ENCODE measurements at regions of chr18 and their contacts with region 1.

Region 1: DNA sequence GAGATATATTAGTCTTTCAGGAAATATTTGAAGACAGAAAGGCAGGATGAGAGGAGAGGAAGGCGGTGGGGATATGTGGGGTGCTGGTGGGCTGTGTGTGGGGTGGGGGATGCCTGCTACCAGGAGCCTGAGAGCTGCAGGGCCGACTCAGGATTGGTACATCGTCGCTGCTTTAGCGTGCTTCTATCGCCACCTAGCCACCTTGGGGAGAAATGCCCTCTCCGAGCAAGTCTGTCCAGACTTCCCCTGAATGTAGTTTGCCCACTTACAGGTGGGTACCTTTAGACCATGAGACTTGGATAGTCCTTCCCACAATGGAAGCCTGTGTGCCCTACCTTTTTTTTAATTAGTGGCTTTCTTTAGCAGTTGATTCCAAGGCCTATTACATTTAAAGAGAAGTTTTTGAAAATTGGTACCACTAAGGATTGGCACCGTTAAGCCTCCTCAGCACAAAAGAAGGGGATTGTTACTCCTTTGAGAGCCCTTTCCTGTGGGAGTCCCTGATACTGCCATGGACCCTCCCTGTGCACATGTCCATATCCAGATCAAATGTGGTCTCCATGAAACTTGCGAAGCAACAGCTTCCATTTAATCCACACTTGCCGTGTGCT is 114.1 kb upstream of the NDUFV2 start:
- DNase-seq: peak; percentile 34
- H3K4me3 ChIP-seq: no peak overlapping the region
- H3K27ac ChIP-seq: no peak overlapping the region
- H3K4me1 ChIP-seq: peaks cover 38% of the 10 kb centered on the region
- H3K27me3 ChIP-seq: no peaks in the 10 kb centered on the region
- CTCF ChIP-seq: peak; percentile 93 to 96

Region 2: GRCh38 chr18:7221424-7222155 is 1766.8 kb before region 1 on chr18:
- CTCF ChIA-PET with region 1: no interaction called
- dilution Hi-C with region 1: no loop called
- in situ Hi-C with region 1: no loop called
- intact Hi-C with region 1: loop called (anchors 10 kb)
- DNase-seq: peak; percentile 58
- H3K4me3 ChIP-seq: no peak overlapping the region
- H3K27ac ChIP-seq: no peak overlapping the region
- H3K4me1 ChIP-seq: no peaks in the 10 kb centered on the region
- H3K27me3 ChIP-seq: no peaks in the 10 kb centered on the region
- CTCF ChIP-seq: peak; percentile 94 to 96

Region 3: GRCh38 chr18:8608795-8609658 is 379.3 kb before region 1 on chr18 and contains the start of gene RAB12:
- CTCF ChIA-PET with region 1: no interaction called
- dilution Hi-C with region 1: no loop called
- in situ Hi-C with region 1: no loop called
- intact Hi-C with region 1: no loop called
- DNase-seq: peak; percentile 74
- H3K4me3 ChIP-seq: peak within 1 kb of the TSS; percentile 79 to 91 (median 83)
- H3K27ac ChIP-seq: peak within 1 kb of the TSS; percentile 56
- H3K4me1 ChIP-seq: peaks cover 26% of the 10 kb centered on the region
- H3K27me3 ChIP-seq: no peaks in the 10 kb centered on the region
- CTCF ChIP-seq: peak; percentile 16 to 42
- total RNA-seq, gene RAB12: 36.1 to 47.8 TPM

Region 4: DNA sequence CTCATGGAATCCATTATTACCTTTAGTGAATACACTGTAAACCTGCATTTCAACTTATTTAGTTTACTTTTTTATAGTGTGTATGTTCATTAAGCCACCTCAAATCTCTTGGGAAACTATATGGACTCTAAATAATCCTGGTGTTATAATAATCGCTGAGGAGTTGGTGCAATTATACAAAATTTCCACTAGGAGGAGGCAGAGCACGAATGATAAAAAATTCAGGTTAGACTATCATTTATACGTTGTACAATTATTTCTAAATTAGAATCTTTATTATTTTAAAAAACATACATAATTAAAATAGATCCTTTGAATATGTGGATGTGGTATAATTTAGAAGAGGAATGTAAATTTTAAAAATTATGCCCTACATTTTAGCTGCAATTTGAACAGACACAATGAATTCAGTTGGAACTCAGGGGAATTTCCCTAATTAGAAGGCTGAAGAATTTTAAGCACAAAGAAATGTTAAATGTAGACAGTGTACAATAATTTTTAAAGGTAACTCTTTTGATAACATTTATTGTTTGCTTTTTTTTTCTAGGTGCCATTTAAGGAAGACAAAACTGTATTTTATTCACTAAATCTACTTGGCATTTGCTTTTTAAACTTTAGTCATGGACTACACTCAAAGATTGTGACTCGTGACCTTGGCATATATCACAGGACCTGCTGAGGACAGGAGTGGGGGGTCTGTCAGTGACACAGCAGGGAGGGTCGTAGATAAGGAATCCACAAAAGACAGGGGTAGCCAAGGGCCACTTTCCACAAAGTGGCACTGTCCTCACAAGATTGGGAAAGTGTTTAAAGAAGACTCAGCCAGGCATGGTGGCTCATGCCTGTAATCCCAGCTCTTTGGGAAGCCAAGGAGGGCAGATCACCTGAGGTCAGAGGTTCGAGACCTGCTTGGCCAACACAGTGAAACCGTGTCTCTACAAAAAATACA is 333.6 kb before region 1 on chr18:
- CTCF ChIA-PET with region 1: interaction called, 10 read pairs
- dilution Hi-C with region 1: no loop called
- in situ Hi-C with region 1: loop called (anchors 10 kb)
- intact Hi-C with region 1: loop called (anchors 1 kb)
- DNase-seq: no peak
- H3K4me3 ChIP-seq: no peak overlapping the region
- H3K27ac ChIP-seq: no peak overlapping the region
- H3K4me1 ChIP-seq: peaks cover 11% of the 10 kb centered on the region
- H3K27me3 ChIP-seq: no peaks in the 10 kb centered on the region
- CTCF ChIP-seq: peak; percentile 69 to 71

Region 5: DNA sequence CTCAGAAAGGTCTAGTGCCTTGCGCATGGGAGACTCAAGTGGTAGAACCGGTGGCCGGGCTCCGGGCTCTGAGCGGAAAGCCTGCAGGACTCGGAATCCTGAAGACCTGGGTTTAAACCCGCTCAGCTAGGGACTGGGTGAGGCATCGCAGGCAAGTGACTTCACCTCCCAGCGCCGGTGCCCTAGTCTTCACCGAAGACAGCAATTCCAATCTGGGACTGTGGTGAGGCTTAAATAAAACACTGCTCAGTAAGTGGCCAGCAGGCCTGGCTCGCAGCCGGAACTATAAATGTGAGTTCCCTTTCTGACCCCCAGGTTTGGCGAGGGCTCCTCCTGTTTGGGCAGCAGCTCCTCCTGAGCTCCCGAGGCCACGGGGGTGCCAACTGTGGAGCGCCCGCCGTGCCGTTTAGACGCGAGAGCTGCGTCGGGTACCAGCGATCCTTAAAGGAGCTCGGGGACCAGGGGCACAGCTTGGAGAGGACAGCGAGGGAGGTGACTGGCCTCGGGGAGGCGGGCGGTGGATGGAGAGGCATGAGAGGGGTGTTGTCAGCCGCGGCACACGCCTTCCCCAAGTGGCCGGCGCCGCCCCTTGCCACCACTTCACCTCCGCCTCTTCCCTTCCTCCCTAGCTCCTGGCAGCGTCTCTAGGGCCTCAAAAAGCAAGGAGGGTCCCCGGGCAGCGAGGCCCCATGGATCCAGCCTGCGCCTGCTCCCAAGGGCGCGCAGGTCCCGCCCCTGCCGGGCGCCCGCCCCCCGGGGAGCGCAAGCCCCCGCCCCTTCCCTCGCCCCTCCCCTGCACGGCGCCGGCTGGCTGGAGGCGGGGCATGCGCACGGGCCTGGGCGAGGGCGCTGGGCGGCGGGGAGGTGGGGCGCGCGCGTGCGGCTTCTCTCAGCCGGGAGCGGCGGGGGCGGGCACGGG is 283.7 kb before region 1 on chr18:
- CTCF ChIA-PET with region 1: interaction called, 9 read pairs
- dilution Hi-C with region 1: loop called (anchors 25 kb)
- in situ Hi-C with region 1: loop called in 1 of 2 experiments (anchors 10 kb)
- intact Hi-C with region 1: no loop called
- DNase-seq: peak; percentile 85
- H3K4me3 ChIP-seq: peak overlapping the region; percentile 47 to 80 (median 65)
- H3K27ac ChIP-seq: peak overlapping the region; percentile 47
- H3K4me1 ChIP-seq: peaks cover 15% of the 10 kb centered on the region
- H3K27me3 ChIP-seq: no peaks in the 10 kb centered on the region
- CTCF ChIP-seq: no peak

Region 6: DNA sequence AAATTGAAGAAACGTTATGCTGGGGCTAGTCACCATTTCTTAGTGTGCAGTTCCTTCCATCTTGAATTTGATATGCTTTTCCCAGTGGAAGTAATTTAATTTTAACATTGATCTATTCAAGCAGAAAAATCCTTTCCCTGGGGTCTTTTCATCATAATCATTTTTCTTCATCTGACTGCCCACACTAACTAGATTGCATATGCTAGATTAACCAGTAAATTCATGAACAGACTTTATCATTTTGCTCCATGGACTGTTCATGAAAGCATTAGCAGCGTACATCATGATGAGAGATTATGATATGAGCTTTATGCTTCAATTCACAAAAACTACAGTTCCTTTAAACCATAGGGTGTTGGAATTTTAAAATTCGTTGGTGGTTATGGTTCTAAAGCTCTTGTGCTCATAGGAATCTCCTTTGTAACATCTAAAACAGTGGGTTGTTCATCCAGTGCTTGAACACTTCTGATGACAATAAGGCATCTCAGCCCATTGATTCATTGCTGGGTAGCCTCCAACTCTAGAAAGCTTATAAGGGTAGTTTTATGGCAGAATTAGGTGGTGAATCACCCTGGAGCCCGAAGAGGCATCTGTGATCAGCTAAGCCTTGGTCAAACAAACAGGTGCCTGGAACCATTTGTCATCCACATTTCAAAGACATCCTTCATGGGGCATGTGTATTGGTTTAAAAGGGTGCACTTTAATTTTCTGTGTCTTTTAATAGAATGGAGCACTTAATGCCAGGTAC is 36.9 kb after region 1 on chr18:
- CTCF ChIA-PET with region 1: no interaction called
- dilution Hi-C with region 1: no loop called
- in situ Hi-C with region 1: no loop called
- intact Hi-C with region 1: no loop called
- DNase-seq: peak; percentile 42
- H3K4me3 ChIP-seq: no peak overlapping the region
- H3K27ac ChIP-seq: no peak overlapping the region
- H3K4me1 ChIP-seq: peaks cover 19% of the 10 kb centered on the region
- H3K27me3 ChIP-seq: no peaks in the 10 kb centered on the region
- CTCF ChIP-seq: no peak

Region 7: DNA sequence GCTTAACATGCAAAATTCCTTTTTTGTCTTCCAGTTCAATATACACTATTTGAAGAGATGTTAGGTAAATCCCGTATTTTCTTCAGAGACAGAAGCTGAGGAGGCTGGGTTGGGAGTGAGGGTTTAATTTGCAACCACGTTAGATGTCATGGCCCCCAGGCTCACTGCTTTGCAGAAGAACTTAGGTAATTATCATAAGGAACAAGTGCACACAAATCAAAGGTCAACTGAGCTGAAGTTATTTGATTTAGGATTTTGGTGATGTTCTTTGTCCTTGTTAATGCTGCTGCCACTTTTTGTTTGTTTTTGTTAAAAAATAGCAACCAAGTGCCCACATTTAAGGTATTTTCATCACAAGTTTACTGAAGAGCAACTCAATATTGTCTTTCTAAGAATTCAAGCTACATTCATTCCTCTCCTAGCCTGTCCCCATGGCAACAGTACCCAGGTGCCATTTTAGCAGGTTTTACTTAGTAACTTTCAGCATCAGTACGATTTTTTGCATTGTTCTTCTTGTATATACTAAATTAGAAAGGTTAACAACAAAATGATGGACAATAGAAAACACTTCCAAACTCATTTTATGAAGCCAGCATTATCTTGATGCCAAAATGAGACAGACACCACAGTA is 51.2 kb after region 1 on chr18:
- CTCF ChIA-PET with region 1: interaction called, 20 read pairs
- dilution Hi-C with region 1: no loop called
- in situ Hi-C with region 1: no loop called
- intact Hi-C with region 1: no loop called
- DNase-seq: no peak
- H3K4me3 ChIP-seq: no peak overlapping the region
- H3K27ac ChIP-seq: no peak overlapping the region
- H3K4me1 ChIP-seq: no peaks in the 10 kb centered on the region
- H3K27me3 ChIP-seq: no peaks in the 10 kb centered on the region
- CTCF ChIP-seq: no peak

Region 8: DNA sequence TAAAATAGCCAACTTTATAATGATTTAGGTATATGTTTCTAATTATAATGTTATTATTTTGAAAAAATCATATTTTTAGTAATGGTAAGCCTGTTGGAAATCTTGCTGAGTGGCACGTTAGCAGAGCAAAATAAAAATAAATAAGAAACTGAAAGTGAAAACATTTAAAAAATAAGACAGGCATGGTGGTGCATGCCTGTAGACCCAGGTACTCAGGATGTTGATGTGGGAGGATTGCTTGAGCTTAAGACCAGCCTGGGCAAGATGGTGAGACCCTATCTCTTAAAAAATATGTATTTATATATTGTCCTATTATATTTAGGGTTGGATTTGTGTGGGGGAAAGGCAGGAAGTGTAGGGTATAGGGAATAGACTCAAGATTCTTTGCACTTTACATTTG is 132.4 kb after region 1 on chr18:
- CTCF ChIA-PET with region 1: no interaction called
- dilution Hi-C with region 1: no loop called
- in situ Hi-C with region 1: no loop called
- intact Hi-C with region 1: no loop called
- DNase-seq: no peak
- H3K4me3 ChIP-seq: no peak overlapping the region
- H3K27ac ChIP-seq: no peak overlapping the region
- H3K4me1 ChIP-seq: peaks cover 30% of the 10 kb centered on the region
- H3K27me3 ChIP-seq: no peaks in the 10 kb centered on the region
- CTCF ChIP-seq: no peak

Region 9: GRCh38 chr18:9147440-9148202 is 159.3 kb after region 1 on chr18:
- CTCF ChIA-PET with region 1: interaction called, 3 read pairs
- dilution Hi-C with region 1: no loop called
- in situ Hi-C with region 1: no loop called
- intact Hi-C with region 1: loop called (anchors 2 kb)
- DNase-seq: peak; percentile 62
- H3K4me3 ChIP-seq: no peak overlapping the region
- H3K27ac ChIP-seq: peak overlapping the region; percentile 60
- H3K4me1 ChIP-seq: peaks cover 12% of the 10 kb centered on the region
- H3K27me3 ChIP-seq: no peaks in the 10 kb centered on the region
- CTCF ChIP-seq: peak; percentile 62 to 86

Measured in mammary epithelial cell (primary cell).